ENCODE measurements at regions of chr3 and their contacts with region 1.

Region 1: GRCh38 chr3:172106989-172107388 is 67.6 kb downstream of the FNDC3B start:
- DNase-seq: peak; percentile 90 to 97 (median 96)
- H3K4me3 ChIP-seq: peak overlapping the region in 6 of 7 experiments; percentile 20 to 58 (median 40)
- H3K27ac ChIP-seq: no peak overlapping the region
- H3K4me1 ChIP-seq: peaks cover 28 to 68% (median 37%) of the 10 kb centered on the region in 4 experiments
- H3K27me3 ChIP-seq: no peaks in the 10 kb centered on the region

Region 2: DNA sequence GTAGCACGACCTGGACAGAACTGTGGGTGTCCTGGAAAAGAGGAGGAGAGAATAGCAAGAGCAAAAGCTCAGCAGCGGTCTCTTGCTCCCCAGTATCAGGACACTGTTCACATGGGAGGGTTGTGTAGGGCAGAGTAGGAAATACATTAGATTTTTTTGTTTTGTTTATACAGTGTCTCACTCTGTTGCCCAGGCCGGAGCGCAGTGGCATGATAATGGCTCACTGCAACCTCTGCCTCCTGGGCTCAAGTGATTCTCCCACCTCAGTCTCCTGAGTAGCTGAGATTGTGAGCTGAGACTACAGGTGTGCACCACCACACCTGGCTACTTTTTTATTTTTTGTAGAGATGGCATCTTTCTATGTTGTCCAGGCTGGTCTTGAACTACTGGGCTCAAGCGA is 14.3 kb before region 1 on chr3:
- CTCF ChIA-PET with region 1: interaction called, 12 read pairs
- POLR2A ChIA-PET with region 1: no interaction called
- DNase-seq: no peak
- H3K4me3 ChIP-seq: no peak overlapping the region
- H3K27ac ChIP-seq: no peak overlapping the region
- H3K4me1 ChIP-seq: peaks cover 0 to 24% (median 8%) of the 10 kb centered on the region in 4 experiments
- H3K27me3 ChIP-seq: no peaks in the 10 kb centered on the region

Region 3: GRCh38 chr3:172179680-172180399 is 72.9 kb after region 1 on chr3:
- CTCF ChIA-PET with region 1: no interaction called
- POLR2A ChIA-PET with region 1: no interaction called
- DNase-seq: no peak
- H3K4me3 ChIP-seq: no peak overlapping the region
- H3K27ac ChIP-seq: no peak overlapping the region
- H3K4me1 ChIP-seq: peaks cover 4 to 22% (median 7%) of the 10 kb centered on the region in 4 experiments
- H3K27me3 ChIP-seq: no peaks in the 10 kb centered on the region

Measured in common myeloid progenitor, CD34-positive (primary cell).